GM18951 (cell line): ENCODE measurements at regions of chr7 and their contacts with region 1.

Region 1: GRCh38 chr7:135801045-135801693 is 52.6 kb upstream of the FAM180A start:
- POLR2A ChIP-seq: no peak

Region 2: GRCh38 chr7:135320277-135320676 is 480.9 kb before region 1 on chr7:
- in situ Hi-C with region 1: no loop called
- POLR2A ChIP-seq: no peak

Region 3: DNA sequence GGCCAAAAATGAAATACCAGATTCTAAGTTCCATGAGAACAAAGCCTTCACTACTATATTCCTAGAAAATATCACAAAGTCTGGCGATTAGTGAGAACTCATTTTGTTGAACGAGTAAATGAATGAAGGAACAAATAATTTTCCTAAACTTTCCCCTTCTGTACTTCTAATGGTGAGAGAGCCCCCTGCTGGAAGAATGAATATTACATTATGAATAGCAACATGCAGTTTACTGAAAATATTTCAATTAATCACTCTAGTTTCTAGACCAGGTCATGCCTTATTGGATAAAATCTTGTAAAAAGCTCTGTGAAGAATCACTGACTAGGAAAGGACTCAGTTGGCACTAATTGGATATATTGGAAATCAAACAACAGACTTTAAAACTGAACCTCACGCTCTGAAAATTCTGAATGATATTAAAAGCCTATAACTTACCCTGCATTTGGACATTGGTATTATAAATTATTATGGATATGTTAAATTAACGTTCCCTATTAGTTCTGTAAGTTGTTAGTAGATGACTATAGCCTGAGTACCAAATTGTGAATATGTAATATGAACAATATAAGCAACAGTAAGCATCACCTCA is 208.4 kb after region 1 on chr7:
- in situ Hi-C with region 1: loop called (anchors 5 kb)
- POLR2A ChIP-seq: no peak